Activated CD4-positive, alpha-beta memory T cell treated with anti-CD3 and anti-CD28 coated beads, Interleukin-2, amount 10 ng/mL, durations not matched to agents 7 days and 5 days (primary cell): ENCODE measurements at regions of chr1 and their contacts with region 1.

Region 1: GRCh38 chr1:27556781-27557595 is 47.0 kb downstream of the AHDC1 start:
- DNase-seq: peak; percentile 79
- H3K4me3 Mint-ChIP-seq: peak overlapping the region; percentile 34
- H3K27ac Mint-ChIP-seq: peak overlapping the region; percentile 82
- H3K4me1 Mint-ChIP-seq: peaks cover 34% of the 10 kb centered on the region
- H3K27me3 Mint-ChIP-seq: no peaks in the 10 kb centered on the region

Region 2: DNA sequence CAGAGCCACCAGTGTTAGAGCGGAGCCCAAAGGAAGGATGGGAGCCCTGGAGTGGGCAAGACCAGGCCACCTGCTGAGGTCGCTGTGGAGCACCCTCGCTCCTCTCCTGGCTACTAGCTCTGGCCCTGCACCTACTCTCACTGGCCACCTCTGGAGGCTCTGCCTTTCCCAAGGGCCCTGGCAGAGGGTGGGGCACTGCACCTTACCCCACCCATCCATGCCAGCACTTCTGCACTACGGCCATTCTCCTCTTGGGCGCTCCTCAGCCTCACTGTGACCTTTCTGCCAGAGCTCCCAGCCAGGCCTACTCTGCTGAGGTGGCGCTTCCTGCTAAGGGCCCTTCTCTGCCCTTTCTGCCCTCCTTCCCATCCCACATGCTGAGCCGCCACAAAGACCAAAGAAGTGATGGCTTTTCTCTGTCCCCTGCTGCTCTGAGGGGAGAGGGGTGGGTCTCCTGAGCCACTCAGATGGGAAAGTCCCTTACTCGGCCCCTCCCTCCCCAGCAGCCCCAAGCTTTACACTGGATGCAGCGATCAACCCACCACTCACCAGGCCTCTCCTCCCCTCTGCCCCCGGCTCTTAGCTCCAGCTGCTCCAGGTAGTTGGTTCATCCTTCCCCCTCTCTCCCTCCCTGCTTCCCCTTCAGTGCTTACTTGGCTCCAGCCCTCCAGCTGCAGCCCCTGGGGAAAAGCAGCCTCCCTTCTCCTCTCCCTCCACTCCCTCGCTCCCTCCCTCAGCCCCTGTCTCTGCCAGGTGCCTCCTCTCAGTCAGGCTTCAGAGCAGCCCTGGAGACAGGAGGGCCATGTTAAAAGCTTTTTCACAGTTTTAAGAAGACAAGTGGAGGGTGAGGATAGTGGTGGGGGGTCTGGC is 249.9 kb before region 1 on chr1:
- CTCF ChIA-PET with region 1: no interaction called
- POLR2A ChIA-PET with region 1: no interaction called
- DNase-seq: no peak
- H3K4me3 Mint-ChIP-seq: no peak overlapping the region
- H3K27ac Mint-ChIP-seq: no peak overlapping the region
- H3K4me1 Mint-ChIP-seq: no peaks in the 10 kb centered on the region
- H3K27me3 Mint-ChIP-seq: no peaks in the 10 kb centered on the region

Region 3: GRCh38 chr1:27416387-27417111 is 140.4 kb before region 1 on chr1:
- CTCF ChIA-PET with region 1: interaction called, 17 read pairs
- POLR2A ChIA-PET with region 1: interaction called, 3 read pairs
- DNase-seq: peak; percentile 63
- H3K4me3 Mint-ChIP-seq: no peak overlapping the region
- H3K27ac Mint-ChIP-seq: peak overlapping the region; percentile 25
- H3K4me1 Mint-ChIP-seq: peaks cover 43% of the 10 kb centered on the region
- H3K27me3 Mint-ChIP-seq: no peaks in the 10 kb centered on the region

Region 4: DNA sequence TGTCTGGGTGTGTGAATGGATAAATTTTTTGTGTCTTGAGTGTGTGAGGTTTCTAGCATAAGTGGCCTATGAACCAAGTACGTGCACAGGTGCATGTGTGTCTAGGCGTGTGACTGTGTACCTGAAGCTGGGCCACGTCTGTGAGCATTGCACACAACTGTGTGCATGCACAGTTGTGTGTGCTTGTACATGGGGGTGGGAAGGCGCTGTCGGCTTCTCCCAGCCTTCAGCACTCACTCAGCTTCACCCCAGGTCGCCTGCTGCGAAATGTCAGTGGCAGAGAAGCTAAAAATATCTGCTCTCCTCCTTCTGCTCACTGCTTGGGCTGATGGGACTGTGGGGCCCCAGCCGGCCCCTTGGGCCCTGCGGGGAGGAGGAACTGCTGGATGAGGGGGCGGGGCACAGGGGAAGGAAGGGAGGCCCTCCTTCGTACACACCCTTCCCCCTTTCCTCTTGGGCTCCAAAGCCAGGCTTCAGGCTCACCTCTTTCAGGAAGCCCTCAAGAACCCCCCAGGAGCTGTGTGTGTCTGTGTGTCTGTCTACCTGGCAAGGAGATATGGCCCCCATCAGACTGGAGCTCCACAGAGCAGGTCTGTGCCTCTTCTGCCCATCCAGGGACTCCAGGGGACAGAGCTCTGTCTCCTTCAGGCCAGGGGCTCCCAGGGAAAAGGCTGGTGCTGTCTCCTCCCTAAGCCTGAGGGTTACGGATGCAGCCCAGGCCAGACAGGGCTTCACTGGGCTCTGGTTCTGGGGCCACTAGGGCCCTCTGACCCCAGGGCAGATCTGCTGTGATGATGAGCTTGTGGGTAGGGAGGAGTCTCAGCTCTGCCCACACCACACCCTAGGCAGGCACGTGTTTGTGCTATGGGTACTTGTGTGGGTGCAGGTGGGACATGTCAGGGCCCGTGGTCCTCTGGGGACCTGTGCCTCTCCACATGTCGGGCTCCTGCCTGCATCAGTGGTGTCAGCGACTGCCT is 31.4 kb before region 1 on chr1:
- CTCF ChIA-PET with region 1: interaction called, 20 read pairs
- POLR2A ChIA-PET with region 1: interaction called, 8 read pairs
- DNase-seq: peak; percentile 73
- H3K4me3 Mint-ChIP-seq: peak overlapping the region; percentile 68
- H3K27ac Mint-ChIP-seq: peak overlapping the region; percentile 61
- H3K4me1 Mint-ChIP-seq: peaks cover 70% of the 10 kb centered on the region
- H3K27me3 Mint-ChIP-seq: peaks cover 4% of the 10 kb centered on the region

Region 5: DNA sequence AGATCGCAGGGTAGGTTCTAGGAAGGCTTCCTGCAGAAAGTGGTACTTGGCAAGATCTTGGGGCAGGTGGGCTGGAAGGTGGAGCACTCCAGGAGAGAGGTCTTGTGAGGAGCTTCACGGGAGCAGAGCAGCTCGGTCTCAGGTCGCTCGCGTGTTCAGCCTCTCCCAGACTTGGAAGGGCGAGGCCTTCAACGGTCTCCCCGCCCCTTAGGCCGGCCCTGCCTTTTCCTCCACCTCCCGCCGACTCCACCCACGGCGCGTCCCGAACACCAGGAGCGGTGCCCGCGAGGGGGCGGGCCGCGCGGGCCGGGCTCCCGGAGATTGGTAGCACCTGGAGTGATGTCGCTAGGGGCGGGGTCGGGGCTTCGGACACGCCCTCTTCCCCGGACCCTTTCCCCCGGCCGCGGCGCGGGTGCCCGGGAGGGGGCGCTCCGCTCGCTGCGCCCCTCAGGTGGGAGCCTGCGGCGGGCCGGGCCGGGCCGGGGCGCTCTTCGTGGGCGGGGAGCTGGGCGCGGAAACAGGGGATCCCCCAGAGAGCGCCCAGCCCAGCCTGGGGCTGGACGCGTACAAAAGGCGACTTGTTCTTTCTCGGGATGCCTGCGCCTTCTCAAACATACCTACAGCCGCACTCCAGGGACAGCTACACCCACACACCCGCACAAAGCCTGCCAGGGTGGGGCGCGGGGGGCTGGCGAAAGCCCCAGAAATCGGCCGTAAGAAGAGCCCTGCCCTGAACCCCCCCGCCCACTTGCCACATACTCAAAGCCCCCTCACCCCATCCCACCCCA is 11.5 kb after region 1 on chr1:
- CTCF ChIA-PET with region 1: interaction called, 82 read pairs
- POLR2A ChIA-PET with region 1: interaction called, 6 read pairs
- DNase-seq: peak; percentile 96
- H3K4me3 Mint-ChIP-seq: peak overlapping the region; percentile 73
- H3K27ac Mint-ChIP-seq: no peak overlapping the region
- H3K4me1 Mint-ChIP-seq: peaks cover 24% of the 10 kb centered on the region
- H3K27me3 Mint-ChIP-seq: peaks cover 6% of the 10 kb centered on the region

Region 6: GRCh38 chr1:27603681-27604578 is 46.9 kb after region 1 on chr1 and contains the start of gene AHDC1:
- CTCF ChIA-PET with region 1: interaction called, 70 read pairs
- POLR2A ChIA-PET with region 1: interaction called, 25 read pairs
- DNase-seq: peak; percentile 92
- H3K4me3 Mint-ChIP-seq: peak within 1 kb of the TSS; percentile 97
- H3K27ac Mint-ChIP-seq: peak within 1 kb of the TSS; percentile 80
- H3K4me1 Mint-ChIP-seq: peaks cover 48% of the 10 kb centered on the region
- H3K27me3 Mint-ChIP-seq: peaks cover 8% of the 10 kb centered on the region
- total RNA-seq, gene AHDC1: 16.9 to 18.9 TPM

Region 7: GRCh38 chr1:27662707-27663393 is 105.9 kb after region 1 on chr1:
- CTCF ChIA-PET with region 1: interaction called, 40 read pairs
- POLR2A ChIA-PET with region 1: interaction called, 11 read pairs
- DNase-seq: peak; percentile 93
- H3K4me3 Mint-ChIP-seq: peak overlapping the region; percentile 53
- H3K27ac Mint-ChIP-seq: peak overlapping the region; percentile 97
- H3K4me1 Mint-ChIP-seq: peaks cover 64% of the 10 kb centered on the region
- H3K27me3 Mint-ChIP-seq: no peaks in the 10 kb centered on the region